Gastrocnemius medialis (tissue), 4 donors: ENCODE measurements at regions of chr20 and their contacts with region 1.

Region 1: DNA sequence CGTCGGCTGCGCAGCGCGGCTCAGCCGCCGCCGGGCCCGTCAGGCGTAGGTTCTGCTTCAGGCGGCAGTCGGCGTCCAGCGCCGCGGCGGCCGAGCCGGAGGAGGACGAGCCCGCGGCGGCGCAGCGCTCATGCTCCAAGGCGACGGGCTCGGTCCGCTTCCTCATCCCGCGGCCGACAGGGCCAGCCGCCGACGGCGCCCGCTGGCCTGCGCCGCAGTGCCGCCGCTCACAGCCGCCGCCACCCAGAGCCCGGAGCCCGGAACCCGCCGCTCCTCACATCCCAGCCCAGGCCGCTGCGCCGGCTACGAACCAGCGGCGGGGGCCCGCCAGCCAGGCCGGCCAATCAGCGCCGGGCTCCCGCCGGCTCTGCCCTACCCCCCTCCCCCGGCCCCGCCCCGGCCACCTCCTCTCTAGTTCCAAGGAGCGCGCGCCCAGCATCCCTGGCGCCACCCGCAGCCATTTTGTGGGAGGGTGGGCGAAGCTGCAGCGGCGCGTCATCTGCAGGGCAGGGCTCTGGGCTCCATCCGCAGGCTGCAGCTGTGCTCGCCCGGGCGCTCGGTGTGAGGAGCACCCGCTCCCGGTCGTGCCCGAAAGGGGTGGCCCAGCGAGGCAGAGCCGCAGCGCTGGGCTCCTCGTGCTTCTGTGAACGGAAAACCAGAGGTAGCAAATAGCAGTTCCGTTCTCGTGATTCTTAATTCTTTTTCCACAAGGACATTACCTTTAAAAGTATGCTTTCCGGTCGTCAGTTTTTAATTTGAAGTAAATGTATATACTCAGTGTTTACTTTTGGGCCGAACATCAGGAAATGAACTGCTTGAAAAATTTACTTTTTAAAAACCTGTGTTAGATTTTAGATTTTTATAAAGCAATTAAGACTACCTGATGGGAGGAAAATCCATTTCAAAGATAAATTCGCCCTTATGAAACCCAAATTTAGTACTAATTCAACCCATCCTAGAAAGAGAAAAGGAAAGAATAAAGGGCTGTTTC is at the start of gene ABHD12:
- DNase-seq: peak; percentile 90 to 95
- ATAC-seq: peak; percentile 94 to 95
- H3K4me3 ChIP-seq: peak within 1 kb of the TSS; percentile 72 to 99 (median 84)
- H3K27ac ChIP-seq: peak within 1 kb of the TSS; percentile 71 to 86 (median 84)
- H3K4me1 ChIP-seq: peaks cover 9 to 12% of the 10 kb centered on the region in 2 donors
- H3K27me3 ChIP-seq: no peaks in the 10 kb centered on the region
- CTCF ChIP-seq: no peak
- POLR2A ChIP-seq: peak; percentile 64 to 69
- total RNA-seq, gene ABHD12: 11.9 to 18.4 (median 13.8) TPM

Region 2: GRCh38 chr20:25065625-25066338 is 325.1 kb before region 1 on chr20:
- in situ Hi-C with region 1: loop called in 1 of 4 experiments (anchors 10 kb)
- intact Hi-C with region 1: no loop called
- DNase-seq: peak in 1 of 2 donors; percentile 54
- ATAC-seq: peak; percentile 88 to 93
- H3K4me3 ChIP-seq: no peak overlapping the region
- H3K27ac ChIP-seq: no peak overlapping the region
- H3K4me1 ChIP-seq: peaks cover 0 to 3% of the 10 kb centered on the region in 2 donors
- H3K27me3 ChIP-seq: peaks cover 0 to 3% (median 0%) of the 10 kb centered on the region in 3 donors
- CTCF ChIP-seq: peak; percentile 83 to 91 (median 86)
- POLR2A ChIP-seq: no peak

Region 3: GRCh38 chr20:25116739-25117458 is 273.9 kb before region 1 on chr20:
- in situ Hi-C with region 1: no loop called
- intact Hi-C with region 1: no loop called
- DNase-seq: peak; percentile 63 to 78
- ATAC-seq: peak; percentile 92 to 96
- H3K4me3 ChIP-seq: no peak overlapping the region
- H3K27ac ChIP-seq: peak overlapping the region; percentile 67 to 89 (median 81)
- H3K4me1 ChIP-seq: peaks cover 20 to 22% of the 10 kb centered on the region in 2 donors
- H3K27me3 ChIP-seq: no peaks in the 10 kb centered on the region
- CTCF ChIP-seq: peak in 1 of 5 experiments; percentile 13
- POLR2A ChIP-seq: no peak

Region 4: DNA sequence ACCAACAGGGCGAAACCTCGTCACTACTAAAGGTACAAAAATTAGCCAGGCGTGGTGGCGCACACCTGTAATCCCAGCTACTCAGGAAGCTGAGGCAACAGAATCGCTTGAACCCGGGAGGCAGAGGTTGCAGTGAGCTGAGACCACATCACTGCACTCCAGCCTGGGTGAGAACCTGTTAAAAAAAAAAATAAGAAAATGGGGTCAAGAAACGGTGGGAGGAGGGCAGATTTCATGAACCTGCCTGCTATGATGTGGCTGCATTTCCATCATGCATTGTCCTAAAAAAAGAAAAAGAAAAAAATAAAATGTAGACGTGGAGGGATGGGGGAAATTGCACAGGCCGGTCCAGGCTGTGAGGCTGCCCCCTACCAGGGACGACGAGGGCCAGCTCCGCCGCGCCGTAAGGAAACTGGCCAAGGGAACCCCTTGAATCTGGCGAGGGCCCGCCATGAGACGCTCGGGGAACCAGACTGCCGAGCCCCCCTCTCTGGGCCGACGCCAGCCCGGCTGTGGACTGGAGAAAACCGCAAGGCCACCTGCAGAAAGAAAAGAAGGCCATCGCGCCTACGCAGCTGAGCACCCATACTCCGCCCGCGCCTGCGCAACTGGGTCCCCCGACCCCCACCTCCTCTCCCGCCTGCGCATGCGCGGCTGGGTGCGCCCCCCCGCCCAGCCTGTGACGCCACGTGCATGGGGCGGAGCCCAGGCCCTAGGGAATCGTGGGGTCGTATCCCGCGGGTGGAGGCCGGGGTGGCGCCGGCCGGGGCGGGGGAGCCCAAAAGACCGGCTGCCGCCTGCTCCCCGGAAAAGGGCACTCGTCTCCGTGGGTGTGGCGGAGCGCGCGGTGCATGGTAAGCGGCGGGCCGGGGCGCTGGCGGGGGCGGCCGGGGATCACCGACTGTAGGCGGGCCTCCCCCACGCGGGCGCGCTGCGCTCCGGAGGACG is 195.5 kb before region 1 on chr20 and contains the start of gene ENTPD6:
- in situ Hi-C with region 1: loop called in 1 of 4 experiments (anchors 10 kb)
- intact Hi-C with region 1: loop called (anchors 5 kb)
- DNase-seq: peak; percentile 81 to 88
- ATAC-seq: peak; percentile 94
- H3K4me3 ChIP-seq: peak within 1 kb of the TSS; percentile 75 to 96 (median 84)
- H3K27ac ChIP-seq: peak within 1 kb of the TSS; percentile 78 to 95 (median 86)
- H3K4me1 ChIP-seq: peaks cover 6 to 24% of the 10 kb centered on the region in 2 donors
- H3K27me3 ChIP-seq: no peaks in the 10 kb centered on the region
- CTCF ChIP-seq: peak in 2 of 5 experiments; percentile 28 to 31
- POLR2A ChIP-seq: peak; percentile 59 to 78
- total RNA-seq, gene ENTPD6: 27.0 to 61.1 (median 50.2) TPM

Region 5: GRCh38 chr20:25254986-25255680 is 135.7 kb before region 1 on chr20:
- in situ Hi-C with region 1: loop called in 1 of 4 experiments (anchors 25 kb)
- intact Hi-C with region 1: no loop called
- DNase-seq: peak; percentile 41 to 66
- ATAC-seq: peak; percentile 83 to 86
- H3K4me3 ChIP-seq: no peak overlapping the region
- H3K27ac ChIP-seq: peak overlapping the region in 1 of 4 donors; percentile 64
- H3K4me1 ChIP-seq: peaks cover 22 to 37% of the 10 kb centered on the region in 2 donors
- H3K27me3 ChIP-seq: no peaks in the 10 kb centered on the region
- CTCF ChIP-seq: no peak
- POLR2A ChIP-seq: no peak

Region 6: DNA sequence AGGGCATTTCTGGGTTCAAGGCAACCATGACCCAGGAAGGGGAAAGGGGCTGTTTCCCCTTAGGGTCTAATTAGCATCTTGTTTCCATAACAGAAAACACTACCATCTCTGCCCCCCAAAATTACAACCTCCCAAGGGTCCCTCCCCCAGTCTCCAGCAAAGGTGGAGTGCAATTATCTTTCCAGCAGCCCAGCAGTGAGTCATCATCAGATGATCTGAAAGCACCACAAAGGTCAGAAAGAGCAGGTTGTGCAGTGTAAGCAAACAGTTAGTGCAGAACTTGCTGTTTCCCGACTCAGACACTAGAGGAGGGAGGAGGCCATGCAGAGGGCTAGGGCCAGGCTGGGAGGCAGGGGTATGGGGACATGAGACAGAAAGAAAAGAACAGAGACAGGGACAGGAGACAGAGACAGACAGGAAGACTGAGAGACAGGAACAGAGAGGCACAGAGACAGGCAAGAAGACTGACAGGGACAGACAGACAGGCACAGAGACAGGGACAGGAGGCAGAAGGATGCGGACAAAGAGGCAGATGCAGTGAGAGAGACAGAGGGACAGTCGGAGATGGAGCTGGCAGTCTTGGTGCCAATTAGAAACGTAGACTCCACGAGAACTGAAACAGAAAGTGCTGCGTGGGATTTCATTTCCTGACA is 80.4 kb before region 1 on chr20:
- in situ Hi-C with region 1: loop called in 1 of 4 experiments (anchors 10 kb)
- intact Hi-C with region 1: no loop called
- DNase-seq: peak; percentile 40 to 66
- ATAC-seq: peak; percentile 85 to 94
- H3K4me3 ChIP-seq: peak overlapping the region in 2 of 4 donors; percentile 17 to 24
- H3K27ac ChIP-seq: peak overlapping the region; percentile 55 to 72 (median 59)
- H3K4me1 ChIP-seq: peaks cover 18% of the 10 kb centered on the region in 2 donors
- H3K27me3 ChIP-seq: no peaks in the 10 kb centered on the region
- CTCF ChIP-seq: peak in 3 of 5 experiments; percentile 14 to 36 (median 32)
- POLR2A ChIP-seq: peak in 1 of 2 donors; percentile 21

Region 7: GRCh38 chr20:25623736-25624499 is 233.1 kb after region 1 on chr20 and contains the start of gene NANP:
- in situ Hi-C with region 1: no loop called
- intact Hi-C with region 1: loop called (anchors 2 kb)
- DNase-seq: peak; percentile 91 to 95
- ATAC-seq: peak; percentile 95 to 96
- H3K4me3 ChIP-seq: peak within 1 kb of the TSS; percentile 72 to 95 (median 85)
- H3K27ac ChIP-seq: peak within 1 kb of the TSS; percentile 87 to 93 (median 92)
- H3K4me1 ChIP-seq: peaks cover 10 to 11% of the 10 kb centered on the region in 2 donors
- H3K27me3 ChIP-seq: no peaks in the 10 kb centered on the region
- CTCF ChIP-seq: peak in 1 of 5 experiments; percentile 3
- POLR2A ChIP-seq: peak; percentile 75 to 79
- total RNA-seq, gene NANP: 1.5 to 3.6 (median 2.6) TPM